HepG2 (cell line): ENCODE measurements at regions of chr16 and their contacts with region 1.

Region 1: GRCh38 chr16:85514595-85515318 is 98.4 kb upstream of the GSE1 start:
- DNase-seq: peak; percentile 99
- ATAC-seq: peak; percentile 79
- H3K4me3 ChIP-seq: peak overlapping the region; percentile 55 to 73 (median 61); a peak in 5 of 6 replicates
- H3K27ac ChIP-seq: peak overlapping the region; percentile 91
- H3K4me1 ChIP-seq: peaks cover 45% of the 10 kb centered on the region
- H3K27me3 ChIP-seq: no peaks in the 10 kb centered on the region
- CTCF ChIP-seq: peak; percentile 63
- EP300 ChIP-seq: peak; percentile 92 to 97
- POLR2A ChIP-seq: peak in 1 of 2 experiments; percentile 40; a peak in 2 of 4 replicates
- RAD21 ChIP-seq: peak; percentile 74

Region 2: DNA sequence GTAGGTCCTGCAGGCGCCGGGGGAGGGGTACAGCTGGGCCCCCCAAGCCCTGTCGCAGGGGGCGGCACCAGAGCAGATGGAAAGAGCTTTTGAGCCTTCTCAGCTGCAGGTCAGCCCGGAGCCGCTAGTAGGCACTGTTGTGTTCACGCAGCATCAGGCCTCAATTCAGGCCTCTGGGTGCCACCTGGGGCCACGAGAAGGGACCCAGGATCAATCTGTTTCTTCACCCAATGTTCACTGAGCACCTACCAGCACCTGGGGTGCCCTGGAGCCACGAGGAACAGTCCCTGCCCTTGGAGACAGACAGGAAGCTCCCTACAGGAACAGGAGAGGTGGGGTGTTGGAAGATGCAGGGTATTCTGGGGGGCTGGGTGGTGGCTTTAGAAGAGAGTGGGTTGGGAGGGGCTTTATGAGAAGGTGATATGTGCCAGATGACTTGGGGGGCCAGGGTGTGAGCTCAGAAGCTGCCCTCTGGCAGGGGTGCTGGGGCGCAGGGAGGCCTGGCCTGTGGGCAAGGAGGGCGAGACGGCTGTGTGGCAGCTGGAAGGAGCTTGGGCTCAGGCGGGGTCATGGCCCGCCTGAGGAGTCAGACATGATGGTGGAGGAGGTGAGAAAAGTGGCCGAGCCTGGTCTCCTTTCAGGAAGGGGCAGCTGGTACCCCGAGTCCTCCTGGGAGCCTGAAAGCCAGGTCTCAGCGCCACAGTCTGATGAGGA is 23.5 kb before region 1 on chr16:
- CTCF ChIA-PET with region 1: interaction called, 5 read pairs
- POLR2A ChIA-PET with region 1: interaction called, 35 read pairs
- in situ Hi-C with region 1: no loop called
- intact Hi-C with region 1: loop called (anchors 1 kb)
- DNase-seq: peak; percentile 53
- ATAC-seq: peak; percentile 62
- H3K4me3 ChIP-seq: peak overlapping the region in 2 of 3 experiments; percentile 20 to 61; a peak in 2 of 6 replicates
- H3K27ac ChIP-seq: no peak overlapping the region
- H3K4me1 ChIP-seq: peaks cover 32% of the 10 kb centered on the region
- H3K27me3 ChIP-seq: peaks cover 0 to 2% of the 10 kb centered on the region in 2 experiments; a peak in 1 of 5 replicates
- CTCF ChIP-seq: peak; percentile 95
- EP300 ChIP-seq: no peak
- POLR2A ChIP-seq: no peak
- RAD21 ChIP-seq: peak; percentile 90

Region 3: GRCh38 chr16:85528528-85529387 is 14.0 kb after region 1 on chr16:
- CTCF ChIA-PET with region 1: no interaction called
- POLR2A ChIA-PET with region 1: interaction called, 235 read pairs
- in situ Hi-C with region 1: no loop called
- intact Hi-C with region 1: no loop called
- DNase-seq: no peak
- ATAC-seq: no peak
- H3K4me3 ChIP-seq: no peak overlapping the region
- H3K27ac ChIP-seq: no peak overlapping the region
- H3K4me1 ChIP-seq: peaks cover 99% of the 10 kb centered on the region
- H3K27me3 ChIP-seq: no peaks in the 10 kb centered on the region
- CTCF ChIP-seq: peak; percentile 72
- EP300 ChIP-seq: no peak
- POLR2A ChIP-seq: no peak
- RAD21 ChIP-seq: 0 out of 2 replicates have a peak, but pooled peaks have one; percentile 39

Region 4: DNA sequence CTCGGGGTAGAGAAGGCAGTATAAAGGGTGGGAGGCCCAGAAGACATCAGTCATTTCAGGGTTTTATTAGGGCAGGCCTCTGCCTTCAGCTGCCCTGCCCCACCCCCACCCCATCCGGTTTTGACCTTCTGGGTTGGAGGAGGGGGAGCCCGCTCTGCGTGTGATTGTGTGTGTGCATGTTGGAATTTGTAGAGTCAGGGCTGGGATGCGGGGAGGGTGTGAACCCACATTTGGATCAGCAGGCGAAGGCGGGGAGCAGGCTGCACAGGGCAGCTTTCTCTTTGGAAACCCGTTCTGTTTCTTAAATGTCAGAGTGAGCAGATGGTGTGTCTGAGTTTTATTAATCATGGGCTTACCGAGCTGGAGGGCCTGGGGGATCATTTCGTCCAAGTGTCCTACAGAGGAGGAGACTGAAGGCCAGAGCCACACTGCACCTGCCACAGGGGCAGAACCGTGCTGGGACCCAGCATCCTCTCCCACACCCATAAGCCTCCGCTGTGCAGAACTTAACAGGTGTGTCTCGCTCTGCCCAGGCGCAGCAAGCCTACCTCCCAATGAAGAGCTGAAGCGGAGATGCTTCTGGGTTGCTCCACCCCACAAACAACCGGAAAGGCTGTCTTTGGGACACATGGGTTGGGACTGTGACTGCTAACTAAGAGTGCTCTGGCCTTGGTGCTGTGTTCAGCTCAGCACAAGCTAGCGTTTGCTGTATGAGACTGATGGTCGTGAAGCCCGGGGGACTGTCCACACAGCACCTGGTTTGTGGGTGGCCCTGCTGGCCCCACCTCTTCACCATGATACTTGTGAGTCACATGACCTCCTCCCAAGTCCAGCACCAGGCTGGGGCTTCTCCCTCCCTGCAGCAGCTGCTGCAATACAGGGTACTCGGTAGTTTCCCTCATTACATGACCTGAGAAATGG is 27.5 kb after region 1 on chr16:
- CTCF ChIA-PET with region 1: no interaction called
- POLR2A ChIA-PET with region 1: interaction called, 205 read pairs
- in situ Hi-C with region 1: no loop called
- intact Hi-C with region 1: no loop called
- DNase-seq: no peak
- ATAC-seq: no peak
- H3K4me3 ChIP-seq: no peak overlapping the region
- H3K27ac ChIP-seq: no peak overlapping the region
- H3K4me1 ChIP-seq: peaks cover 74% of the 10 kb centered on the region
- H3K27me3 ChIP-seq: no peaks in the 10 kb centered on the region
- CTCF ChIP-seq: no peak
- EP300 ChIP-seq: no peak
- POLR2A ChIP-seq: no peak
- RAD21 ChIP-seq: no peak

Region 5: DNA sequence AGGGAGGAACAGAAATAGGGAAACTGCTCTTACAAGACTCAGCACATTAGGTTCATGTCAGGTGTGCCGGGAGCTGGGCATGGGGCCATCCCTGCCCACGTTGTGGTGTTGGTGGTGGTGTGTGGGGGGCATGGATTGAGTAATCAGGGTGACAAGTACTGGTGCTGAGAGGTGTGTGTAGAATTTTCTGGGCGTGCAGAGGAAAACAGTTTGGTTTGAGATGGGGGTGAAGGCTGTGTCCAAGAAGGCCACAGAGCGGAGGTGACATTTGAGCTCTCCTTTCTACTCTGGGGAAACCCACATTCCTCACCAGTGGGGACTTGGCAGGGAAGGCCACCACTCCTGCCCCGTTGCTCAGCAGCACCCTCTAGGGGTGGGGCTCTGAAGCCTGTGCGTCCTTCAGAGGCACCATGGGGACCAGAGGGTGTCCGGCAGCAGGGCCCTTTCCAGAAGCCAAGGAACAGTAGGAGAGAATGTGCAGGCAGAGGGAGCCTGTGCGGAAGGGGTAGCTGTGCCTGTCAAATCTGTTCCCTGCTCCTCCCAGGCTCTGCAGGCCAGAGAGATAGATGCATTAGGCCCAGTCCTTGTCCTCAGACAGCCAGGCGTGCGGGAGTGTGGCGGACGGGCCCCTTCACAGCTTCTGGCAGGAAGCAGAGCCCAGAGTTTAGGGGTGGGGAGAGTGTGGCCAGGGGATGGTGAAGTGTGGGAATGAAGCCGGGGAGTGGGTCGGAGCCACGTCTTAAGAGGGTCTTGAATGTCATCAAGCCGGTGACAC is 49.7 kb after region 1 on chr16:
- CTCF ChIA-PET with region 1: no interaction called
- POLR2A ChIA-PET with region 1: interaction called, 17 read pairs
- in situ Hi-C with region 1: no loop called
- intact Hi-C with region 1: no loop called
- DNase-seq: no peak
- ATAC-seq: no peak
- H3K4me3 ChIP-seq: no peak overlapping the region
- H3K27ac ChIP-seq: no peak overlapping the region
- H3K4me1 ChIP-seq: peaks cover 56% of the 10 kb centered on the region
- H3K27me3 ChIP-seq: no peaks in the 10 kb centered on the region
- CTCF ChIP-seq: peak; percentile 72
- EP300 ChIP-seq: no peak
- POLR2A ChIP-seq: no peak
- RAD21 ChIP-seq: no peak